WTC11 (cell line): ENCODE measurements at regions of chr9 and their contacts with region 1.

Region 1: DNA sequence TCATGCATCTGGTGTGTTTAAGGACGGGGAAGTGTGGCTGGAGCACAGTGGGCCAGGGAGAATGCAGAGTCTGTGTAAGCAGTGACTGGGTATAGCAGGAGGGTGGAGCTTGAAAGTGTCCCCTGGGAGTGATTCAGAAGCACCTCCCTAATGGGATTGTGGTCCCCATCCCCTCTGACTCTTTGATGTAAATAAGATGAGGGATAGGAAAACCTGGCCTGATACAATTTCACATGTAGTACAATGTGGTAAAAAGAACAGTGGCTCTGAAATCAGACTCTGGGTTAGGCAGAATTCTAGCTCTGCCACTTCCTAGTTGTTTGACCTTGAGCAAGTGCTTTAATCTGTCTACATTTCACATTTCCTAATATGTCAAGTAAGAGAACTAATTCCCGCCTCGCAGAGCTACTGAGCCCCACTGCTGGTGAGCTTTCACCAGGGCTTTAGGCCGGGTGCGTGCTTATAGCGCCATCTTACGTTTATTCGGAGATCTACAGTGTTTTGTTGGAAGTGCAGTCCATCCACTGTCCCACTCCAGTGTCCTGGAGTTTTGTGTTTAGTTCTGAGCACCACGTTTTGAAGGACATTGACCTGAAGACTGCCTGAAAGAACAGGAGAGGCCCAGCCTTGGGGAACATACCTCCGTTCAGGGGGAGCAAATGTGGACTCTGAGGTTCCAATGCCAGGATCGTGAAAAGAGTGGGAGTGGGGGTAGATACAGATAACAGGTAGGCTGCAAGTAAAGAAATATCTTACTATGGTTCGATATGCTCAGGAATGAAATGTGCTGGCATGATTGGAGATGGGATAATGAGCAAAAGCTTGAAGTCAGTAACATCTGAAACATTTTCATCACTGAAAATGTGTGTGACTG is 51.2 kb upstream of the TESK1 start:
- DNase-seq: peak; percentile 63
- ATAC-seq: peak; percentile 94
- H3K4me3 Mint-ChIP-seq: no peak overlapping the region
- H3K27ac Mint-ChIP-seq: no peak overlapping the region
- H3K4me1 Mint-ChIP-seq: no peaks in the 10 kb centered on the region
- H3K27me3 Mint-ChIP-seq: no peaks in the 10 kb centered on the region; the same call in 1 of the 2 replicates
- CTCF ChIP-seq: peak; percentile 77

Region 2: DNA sequence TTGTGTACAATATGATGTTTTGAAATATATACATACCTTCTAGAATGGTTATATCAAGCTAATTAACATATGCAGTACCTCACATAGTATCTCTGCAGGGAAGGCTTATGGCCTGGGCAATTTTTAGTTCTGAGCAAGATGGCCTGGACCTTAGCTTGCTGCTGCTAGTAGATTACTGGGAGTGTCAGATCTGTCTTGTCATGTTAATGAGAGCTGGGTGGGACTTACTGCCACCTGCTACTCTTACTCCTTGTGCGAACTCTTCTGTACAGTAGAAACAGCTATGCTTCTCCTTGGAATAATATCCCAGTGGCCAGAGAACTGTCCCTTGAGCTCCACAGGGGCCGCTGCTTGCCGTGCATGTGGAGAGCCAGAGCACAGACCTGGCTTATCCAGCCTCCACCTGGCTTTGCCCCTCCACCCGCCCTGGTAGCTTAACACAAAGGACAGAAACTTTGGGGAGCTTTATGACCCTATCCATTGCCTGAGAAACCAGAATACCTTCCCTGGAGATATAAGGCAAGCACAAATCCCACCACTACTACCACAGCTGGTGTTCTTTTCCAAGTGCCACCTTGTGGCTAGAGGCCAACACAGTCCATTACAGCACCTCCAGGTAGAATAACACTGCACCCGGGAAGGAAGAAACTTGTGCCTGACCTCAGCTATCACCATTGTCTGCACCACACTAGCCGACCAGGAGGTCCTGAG is 138.4 kb before region 1 on chr9:
- CTCF ChIA-PET with region 1: interaction called, 16 read pairs
- POLR2A ChIA-PET with region 1: no interaction called
- DNase-seq: peak; percentile 23
- ATAC-seq: peak; percentile 98
- H3K4me3 Mint-ChIP-seq: no peak overlapping the region
- H3K27ac Mint-ChIP-seq: no peak overlapping the region
- H3K4me1 Mint-ChIP-seq: peaks cover 15% of the 10 kb centered on the region
- H3K27me3 Mint-ChIP-seq: peaks cover 1% of the 10 kb centered on the region
- CTCF ChIP-seq: no peak

Region 3: GRCh38 chr9:35484406-35484805 is 69.5 kb before region 1 on chr9:
- CTCF ChIA-PET with region 1: interaction called, 44 read pairs
- POLR2A ChIA-PET with region 1: no interaction called
- DNase-seq: no peak
- ATAC-seq: no peak
- H3K4me3 Mint-ChIP-seq: no peak overlapping the region
- H3K27ac Mint-ChIP-seq: no peak overlapping the region
- H3K4me1 Mint-ChIP-seq: peaks cover 18% of the 10 kb centered on the region
- H3K27me3 Mint-ChIP-seq: peaks cover 6% of the 10 kb centered on the region; the same call in 1 of the 2 replicates
- CTCF ChIP-seq: no peak

Region 4: GRCh38 chr9:35518226-35518821 is 35.6 kb before region 1 on chr9:
- CTCF ChIA-PET with region 1: interaction called, 27 read pairs
- POLR2A ChIA-PET with region 1: interaction called, 4 read pairs
- DNase-seq: peak; percentile 59
- ATAC-seq: peak; percentile 95
- H3K4me3 Mint-ChIP-seq: peak overlapping the region; percentile 12; the same call in 1 of the 2 replicates
- H3K27ac Mint-ChIP-seq: peak overlapping the region; percentile 73
- H3K4me1 Mint-ChIP-seq: peaks cover 47% of the 10 kb centered on the region
- H3K27me3 Mint-ChIP-seq: no peaks in the 10 kb centered on the region
- CTCF ChIP-seq: no peak

Region 5: DNA sequence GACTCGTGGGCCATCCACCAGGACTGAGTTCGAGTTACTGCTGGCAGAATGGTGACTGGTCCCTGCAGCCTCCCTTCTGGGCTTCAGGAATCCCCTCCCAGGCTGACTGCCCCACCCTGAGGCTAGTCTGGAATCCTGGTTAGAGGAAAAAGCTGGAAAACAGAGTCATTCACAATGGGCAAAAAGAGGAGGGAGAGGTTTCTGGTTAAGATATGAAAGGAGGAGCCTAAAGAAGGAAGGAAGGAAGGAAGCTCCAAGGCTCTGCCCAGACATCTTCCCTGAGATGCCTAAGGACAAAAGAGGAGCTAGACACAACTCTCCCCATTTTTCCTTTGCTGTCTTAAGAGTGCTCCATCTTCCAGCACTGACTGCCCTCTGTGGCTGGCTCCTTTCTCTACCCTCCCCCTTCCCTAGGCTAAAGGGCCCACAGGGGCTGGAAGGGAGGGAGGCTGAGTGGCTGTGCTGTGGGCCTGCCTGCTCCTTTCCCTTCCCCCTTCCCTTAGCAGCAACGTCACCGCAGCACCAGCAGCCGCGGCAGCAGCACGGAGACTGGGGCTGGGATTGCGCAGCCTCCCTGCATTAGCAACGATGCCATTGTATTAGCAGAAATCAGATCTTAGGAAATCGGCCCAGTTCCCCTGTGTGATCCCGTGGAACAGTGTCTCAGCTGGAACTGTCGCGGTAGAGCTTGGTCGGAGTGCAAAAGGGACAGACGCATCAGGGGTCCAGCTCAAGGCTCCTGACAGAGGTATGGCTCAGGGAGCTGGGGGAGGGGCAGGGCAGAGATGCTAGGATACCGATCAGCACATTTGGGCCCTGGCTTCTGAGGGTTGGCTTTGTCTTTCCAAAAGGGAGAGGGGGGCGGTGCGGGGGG is 15.3 kb before region 1 on chr9:
- CTCF ChIA-PET with region 1: interaction called, 39 read pairs
- POLR2A ChIA-PET with region 1: interaction called, 5 read pairs
- DNase-seq: peak; percentile 64
- ATAC-seq: peak; percentile 92
- H3K4me3 Mint-ChIP-seq: peak overlapping the region; percentile 70
- H3K27ac Mint-ChIP-seq: peak overlapping the region; percentile 48
- H3K4me1 Mint-ChIP-seq: peaks cover 26% of the 10 kb centered on the region
- H3K27me3 Mint-ChIP-seq: no peaks in the 10 kb centered on the region
- CTCF ChIP-seq: no peak

Region 6: GRCh38 chr9:35579130-35579529 is 25.2 kb after region 1 on chr9:
- CTCF ChIA-PET with region 1: no interaction called
- POLR2A ChIA-PET with region 1: no interaction called
- DNase-seq: no peak
- ATAC-seq: no peak
- H3K4me3 Mint-ChIP-seq: no peak overlapping the region
- H3K27ac Mint-ChIP-seq: no peak overlapping the region
- H3K4me1 Mint-ChIP-seq: peaks cover 13% of the 10 kb centered on the region
- H3K27me3 Mint-ChIP-seq: no peaks in the 10 kb centered on the region
- CTCF ChIP-seq: no peak